Aorta (tissue), 5 donors: ENCODE measurements at regions of chr5 and their contacts with region 1.

Region 1: DNA sequence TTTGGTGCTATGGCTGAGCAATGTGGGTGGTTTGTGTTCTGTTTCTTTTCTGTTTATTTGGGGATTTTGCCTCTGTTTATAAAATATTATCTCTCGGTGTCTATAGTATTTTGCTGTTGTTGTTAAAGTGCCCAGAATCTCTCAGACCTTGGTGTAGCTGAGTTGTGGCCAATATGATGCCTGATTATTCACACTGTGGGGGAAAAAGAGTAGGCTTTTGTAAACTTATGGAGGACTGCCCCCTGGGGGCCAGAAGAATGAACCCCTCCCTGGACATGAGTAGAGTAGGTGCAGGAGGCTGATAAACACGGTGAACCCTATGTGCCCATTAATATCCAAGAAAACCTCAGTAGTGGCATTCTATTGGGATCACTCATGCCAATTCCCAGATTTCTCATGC is 49.0 kb upstream of the DPYSL3 start:
- DNase-seq: peak; percentile 74 to 86
- ATAC-seq: peak; percentile 81
- H3K4me3 ChIP-seq: no peak overlapping the region
- H3K27ac ChIP-seq: no peak overlapping the region
- H3K4me1 ChIP-seq: no peaks in the 10 kb centered on the region
- H3K27me3 ChIP-seq: no peaks in the 10 kb centered on the region

Region 2: DNA sequence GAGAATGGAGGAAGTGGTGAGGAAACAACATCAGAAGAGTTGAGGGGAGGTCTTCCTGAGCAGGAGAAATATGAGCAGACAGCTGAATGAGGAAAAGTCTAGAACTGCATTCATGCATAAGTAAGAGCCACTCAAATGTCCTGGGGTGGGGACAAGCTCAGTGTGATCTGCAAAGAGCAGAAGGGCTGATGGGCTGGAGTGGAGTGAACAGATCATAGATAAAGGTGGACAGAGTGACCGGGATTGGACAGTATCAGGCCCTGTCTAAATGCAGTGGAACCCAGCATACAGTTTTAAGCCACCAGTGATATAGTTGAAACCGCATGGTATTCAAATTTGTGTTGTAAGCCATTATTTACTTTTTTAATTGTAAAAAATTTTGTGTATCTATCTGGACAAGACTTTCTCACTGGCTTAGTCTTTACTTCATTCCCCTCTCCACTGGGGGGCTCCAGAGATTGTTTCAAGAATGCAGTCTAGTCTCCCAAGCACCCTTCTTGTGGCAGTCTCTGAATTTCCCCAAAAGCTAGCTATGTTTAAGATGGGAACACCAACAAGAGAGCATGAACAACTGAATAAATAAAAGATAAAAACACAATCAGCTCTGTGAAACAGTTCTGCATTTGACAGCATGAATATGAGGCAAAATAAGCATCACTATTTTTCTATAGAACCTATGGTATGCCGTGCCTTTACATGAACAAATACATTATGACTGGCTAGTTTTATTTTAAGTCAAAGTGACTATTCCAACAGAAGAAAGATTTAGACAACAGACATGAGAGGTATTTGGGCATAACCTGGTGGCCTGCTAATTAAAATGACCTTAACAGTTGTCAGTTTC is 334.7 kb before region 1 on chr5:
- intact Hi-C with region 1: loop called in 1 of 2 experiments (anchors 5 kb)
- DNase-seq: no peak
- ATAC-seq: peak; percentile 81
- H3K4me3 ChIP-seq: no peak overlapping the region
- H3K27ac ChIP-seq: no peak overlapping the region
- H3K4me1 ChIP-seq: no peaks in the 10 kb centered on the region
- H3K27me3 ChIP-seq: no peaks in the 10 kb centered on the region

Region 3: GRCh38 chr5:147234825-147235635 is 323.8 kb before region 1 on chr5 and contains the start of gene STK32A:
- intact Hi-C with region 1: loop called in 1 of 2 experiments (anchors 5 kb)
- DNase-seq: peak; percentile 88 to 91
- ATAC-seq: peak; percentile 93
- H3K4me3 ChIP-seq: peak within 1 kb of the TSS; percentile 61 to 65
- H3K27ac ChIP-seq: peak within 1 kb of the TSS; percentile 16 to 90
- H3K4me1 ChIP-seq: peaks cover 0 to 1% of the 10 kb centered on the region in 2 donors
- H3K27me3 ChIP-seq: no peaks in the 10 kb centered on the region
- total RNA-seq, gene STK32A: 6.4 to 14.5 TPM

Region 4: DNA sequence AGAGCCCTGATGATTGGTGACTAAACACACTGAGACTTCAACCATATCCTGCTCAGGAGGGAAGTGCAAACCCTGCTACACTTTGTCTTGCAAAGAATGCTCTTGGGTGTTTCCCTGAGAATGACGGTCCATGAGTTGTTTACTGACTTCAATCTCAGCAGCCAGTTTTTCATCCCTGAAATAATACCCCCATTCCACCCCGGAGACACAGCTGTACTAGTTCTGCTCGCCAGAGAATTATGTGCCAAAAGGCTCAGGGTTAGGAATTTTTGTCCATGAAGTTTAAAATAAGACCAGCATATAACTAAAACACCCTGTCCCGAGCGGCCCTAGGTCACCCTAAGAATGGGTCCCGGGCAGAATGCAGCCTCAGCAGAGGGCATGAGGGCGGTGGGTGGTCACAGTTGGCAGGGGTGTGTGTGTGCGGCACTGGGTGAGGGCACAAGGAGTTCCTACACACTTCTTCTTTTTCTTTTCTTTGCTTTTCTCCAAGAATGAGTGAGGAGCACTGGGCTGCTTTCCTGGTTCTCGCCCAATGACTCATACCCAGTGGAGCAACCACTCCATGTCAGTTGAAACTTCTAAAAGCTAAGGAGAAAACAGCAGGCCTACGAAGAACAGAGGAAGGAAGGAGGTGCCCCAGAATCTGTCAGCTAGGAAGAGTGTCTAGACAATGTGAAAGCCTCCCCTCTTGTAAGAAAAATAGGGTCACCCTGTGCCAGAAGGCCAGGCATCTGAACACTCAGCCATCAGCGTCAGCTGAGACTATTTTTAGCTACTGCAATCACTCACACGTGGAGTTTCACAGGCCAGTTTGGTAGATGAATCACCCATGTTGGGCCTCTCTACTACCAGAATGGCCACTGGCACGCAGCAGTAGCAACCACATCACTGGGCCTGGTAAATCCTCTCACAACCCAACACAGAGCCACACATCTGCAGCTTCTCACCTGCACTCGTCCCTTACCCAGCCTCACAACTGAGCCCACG is 154.9 kb before region 1 on chr5:
- intact Hi-C with region 1: loop called (anchors 5 kb)
- DNase-seq: peak; percentile 83 to 86
- ATAC-seq: peak; percentile 88
- H3K4me3 ChIP-seq: no peak overlapping the region
- H3K27ac ChIP-seq: peak overlapping the region; percentile 95 to 100
- H3K4me1 ChIP-seq: peaks cover 2 to 7% of the 10 kb centered on the region in 2 donors
- H3K27me3 ChIP-seq: no peaks in the 10 kb centered on the region

Region 5: GRCh38 chr5:147453875-147454814 is 104.7 kb before region 1 on chr5:
- intact Hi-C with region 1: loop called (anchors 1 to 2 kb)
- DNase-seq: peak; percentile 94 to 98
- ATAC-seq: peak; percentile 92
- H3K4me3 ChIP-seq: peak overlapping the region; percentile 90 to 94
- H3K27ac ChIP-seq: peak overlapping the region; percentile 91 to 95
- H3K4me1 ChIP-seq: peaks cover 2% of the 10 kb centered on the region in 2 donors
- H3K27me3 ChIP-seq: no peaks in the 10 kb centered on the region

Region 6: DNA sequence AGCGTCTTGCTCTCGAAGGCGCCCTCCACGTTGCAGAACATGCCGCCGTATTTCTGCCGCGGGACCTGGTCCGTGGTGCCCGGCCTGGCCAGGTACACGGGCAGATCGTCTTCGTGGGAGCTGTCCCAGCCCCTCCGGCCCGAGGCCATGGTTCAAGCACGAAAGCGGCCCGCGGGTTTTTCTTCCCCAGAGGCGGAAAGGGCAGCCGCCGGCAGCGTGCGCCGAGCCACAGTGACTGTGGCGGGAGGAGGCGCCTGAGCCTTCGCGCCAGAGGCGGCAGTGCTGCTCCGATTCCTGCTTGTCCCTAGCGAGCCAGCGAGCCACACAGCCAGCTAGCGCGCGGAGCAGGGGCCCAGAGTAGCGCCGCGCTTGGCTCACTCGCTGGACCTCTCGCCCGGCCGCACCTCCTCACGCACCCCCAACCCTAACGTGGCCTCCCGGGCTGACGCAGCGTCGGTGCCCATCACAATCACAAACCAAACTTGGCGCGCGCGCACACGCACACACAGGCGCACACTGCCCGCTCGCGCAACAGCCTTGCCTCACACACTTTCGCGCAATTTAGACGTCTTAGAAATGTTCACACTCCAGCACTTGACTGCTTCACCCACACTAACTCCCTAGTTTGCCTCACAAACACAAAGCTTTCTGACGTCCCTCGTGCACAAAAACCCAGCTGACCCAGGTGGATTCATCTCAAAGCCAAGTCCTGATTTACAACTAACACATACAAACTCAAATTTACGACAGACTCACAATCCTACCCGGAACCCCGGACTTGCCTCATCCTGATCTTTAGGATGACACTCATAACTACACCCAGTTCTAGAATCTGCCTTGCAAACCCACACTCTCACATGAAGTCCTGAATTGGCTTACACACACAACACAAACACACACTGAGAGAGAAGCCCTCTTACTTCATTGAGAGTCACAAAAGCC is 48.8 kb before region 1 on chr5 and contains the start of gene DPYSL3:
- intact Hi-C with region 1: loop called in 1 of 2 experiments (anchors 5 kb)
- DNase-seq: peak; percentile 86 to 94
- ATAC-seq: peak; percentile 94
- H3K4me3 ChIP-seq: peak within 1 kb of the TSS; percentile 60 to 70
- H3K27ac ChIP-seq: peak within 1 kb of the TSS in 1 of 2 donors; percentile 65
- H3K4me1 ChIP-seq: peaks cover 0 to 2% of the 10 kb centered on the region in 2 donors
- H3K27me3 ChIP-seq: no peaks in the 10 kb centered on the region
- total RNA-seq, gene DPYSL3: 288 to 344 TPM

Region 7: DNA sequence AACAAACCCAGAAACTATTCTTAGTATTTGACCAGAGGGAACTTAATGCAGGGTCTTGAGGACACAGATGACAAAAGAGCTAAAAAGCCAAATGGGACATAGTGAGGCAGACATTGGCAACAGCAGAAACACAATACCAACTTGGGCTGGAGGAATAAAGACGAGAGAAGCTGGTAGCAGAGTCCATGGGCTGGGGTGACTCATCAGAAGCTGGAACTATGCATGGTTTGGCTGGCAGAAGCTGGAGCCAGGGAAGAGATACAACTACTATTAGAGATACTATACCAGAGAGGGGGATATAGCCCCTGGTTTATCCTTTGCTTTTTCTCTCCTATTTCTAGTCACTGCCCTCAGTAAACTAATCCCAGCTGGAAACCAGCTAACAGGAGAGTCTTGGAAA is 19.8 kb before region 1 on chr5:
- intact Hi-C with region 1: loop called in 1 of 2 experiments (anchors 1 kb)
- DNase-seq: no peak
- ATAC-seq: no peak
- H3K4me3 ChIP-seq: no peak overlapping the region
- H3K27ac ChIP-seq: no peak overlapping the region
- H3K4me1 ChIP-seq: no peaks in the 10 kb centered on the region
- H3K27me3 ChIP-seq: no peaks in the 10 kb centered on the region